ENCODE measurements at regions of chr19 and their contacts with region 1.

Region 1: DNA sequence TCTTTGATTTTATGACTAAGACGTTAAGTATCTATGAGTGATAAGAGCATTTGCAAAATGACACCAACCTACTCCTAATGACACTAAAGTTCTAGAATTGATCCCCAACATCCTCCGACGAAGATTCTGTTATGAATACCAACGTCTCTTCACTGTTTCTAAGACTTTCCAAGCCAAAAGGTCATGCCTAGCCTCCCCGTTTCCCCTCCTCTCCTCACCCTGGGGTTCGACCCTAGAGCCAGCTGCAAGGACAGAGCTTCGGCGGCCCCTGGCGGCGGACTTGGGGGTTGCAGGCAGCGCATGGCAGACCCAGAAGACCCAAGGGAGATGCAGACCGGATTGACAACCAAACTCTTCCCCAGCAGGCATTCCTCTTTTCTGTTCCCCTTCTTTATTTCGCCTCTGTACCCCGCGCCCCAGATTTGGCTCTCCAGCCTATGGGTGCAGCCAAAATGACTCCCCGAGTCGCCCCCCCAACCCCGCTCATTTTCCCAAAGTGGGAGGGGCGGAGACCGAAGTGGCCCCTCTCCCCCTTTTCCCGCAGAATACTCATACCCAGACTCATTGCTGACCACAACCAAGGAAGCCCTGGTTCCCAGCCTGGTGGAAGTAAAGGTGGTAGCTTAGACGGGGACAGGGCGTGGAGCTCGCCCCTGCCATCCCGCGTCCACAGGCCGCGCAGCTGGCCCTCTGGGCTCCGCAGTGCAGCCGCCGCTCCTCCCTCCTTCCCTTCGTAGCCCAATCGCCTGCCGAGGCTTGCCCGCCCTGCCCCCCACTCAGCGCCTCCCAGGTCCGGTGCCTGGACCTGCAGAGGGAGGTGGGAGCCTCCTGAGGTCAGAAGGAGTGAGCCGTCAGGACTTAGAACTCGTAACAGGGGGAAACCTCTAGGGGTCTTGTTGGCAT is 4.1 kb upstream of the EML2 start:
- DNase-seq: peak; percentile 91 to 95
- ATAC-seq: peak in 1 of 2 experiments; percentile 16; a peak in 3 of 6 replicates
- H3K4me3 ChIP-seq: peak overlapping the region; percentile 51; the same call in 2 of the 3 replicates
- H3K27ac ChIP-seq: peak overlapping the region; percentile 88 to 90
- H3K4me1 ChIP-seq: peaks cover 44% of the 10 kb centered on the region
- CTCF ChIP-seq: peak; percentile 99
- EP300 ChIP-seq: no peak
- POLR2A ChIP-seq: no peak
- RAD21 ChIP-seq: peak; percentile 99 to 100

Region 2: GRCh38 chr19:45439569-45440254 is 203.6 kb before region 1 on chr19:
- CTCF ChIA-PET with region 1: interaction called, 64 read pairs
- POLR2A ChIA-PET with region 1: interaction called, 4 read pairs
- DNase-seq: peak; percentile 74 to 83
- ATAC-seq: peak; percentile 26 to 55
- H3K4me3 ChIP-seq: peak overlapping the region; percentile 52
- H3K27ac ChIP-seq: peak overlapping the region; percentile 80 to 95
- H3K4me1 ChIP-seq: peaks cover 27% of the 10 kb centered on the region
- CTCF ChIP-seq: peak; percentile 100
- EP300 ChIP-seq: no peak
- POLR2A ChIP-seq: peak; percentile 12; the same call in 1 of the 2 replicates
- RAD21 ChIP-seq: peak; percentile 77 to 99

Region 3: DNA sequence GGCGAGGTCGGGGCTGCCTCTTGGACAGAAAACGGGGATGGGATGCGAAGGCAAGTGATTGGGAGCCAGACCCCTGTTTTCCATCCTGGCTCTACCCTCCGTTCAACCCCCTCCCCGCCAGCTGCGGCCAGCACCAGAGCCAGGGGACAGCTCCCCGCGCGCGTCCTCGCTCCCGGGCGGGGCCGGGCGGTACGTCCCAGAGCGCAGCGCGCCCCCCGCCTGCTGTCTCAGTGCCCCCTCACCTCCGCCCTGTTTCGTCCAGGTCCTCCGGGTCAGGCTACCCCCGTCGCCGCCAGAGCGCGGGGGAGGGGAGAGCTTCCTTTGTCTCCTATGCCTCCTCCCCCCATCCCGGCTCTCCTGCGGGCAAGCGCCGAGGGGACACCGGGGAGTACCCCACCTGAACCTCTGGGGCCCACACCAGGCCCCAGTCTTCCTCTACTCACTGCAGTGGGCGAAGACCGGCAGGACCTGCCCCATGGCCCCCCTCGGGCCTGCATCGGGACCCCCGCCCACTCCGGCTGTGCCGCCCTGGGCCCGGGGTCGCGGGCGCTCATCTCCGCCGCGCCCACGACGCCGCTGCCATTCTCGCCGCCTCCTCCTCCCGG is 146.8 kb before region 1 on chr19:
- CTCF ChIA-PET with region 1: interaction called, 72 read pairs
- POLR2A ChIA-PET with region 1: interaction called, 4 read pairs
- DNase-seq: no peak
- ATAC-seq: peak; percentile 22 to 46
- H3K4me3 ChIP-seq: peak overlapping the region; percentile 75
- H3K27ac ChIP-seq: peak overlapping the region; percentile 61 to 83; a peak in 5 of 6 replicates
- H3K4me1 ChIP-seq: peaks cover 20% of the 10 kb centered on the region
- CTCF ChIP-seq: no peak
- EP300 ChIP-seq: no peak
- POLR2A ChIP-seq: no peak
- RAD21 ChIP-seq: no peak

Region 4: DNA sequence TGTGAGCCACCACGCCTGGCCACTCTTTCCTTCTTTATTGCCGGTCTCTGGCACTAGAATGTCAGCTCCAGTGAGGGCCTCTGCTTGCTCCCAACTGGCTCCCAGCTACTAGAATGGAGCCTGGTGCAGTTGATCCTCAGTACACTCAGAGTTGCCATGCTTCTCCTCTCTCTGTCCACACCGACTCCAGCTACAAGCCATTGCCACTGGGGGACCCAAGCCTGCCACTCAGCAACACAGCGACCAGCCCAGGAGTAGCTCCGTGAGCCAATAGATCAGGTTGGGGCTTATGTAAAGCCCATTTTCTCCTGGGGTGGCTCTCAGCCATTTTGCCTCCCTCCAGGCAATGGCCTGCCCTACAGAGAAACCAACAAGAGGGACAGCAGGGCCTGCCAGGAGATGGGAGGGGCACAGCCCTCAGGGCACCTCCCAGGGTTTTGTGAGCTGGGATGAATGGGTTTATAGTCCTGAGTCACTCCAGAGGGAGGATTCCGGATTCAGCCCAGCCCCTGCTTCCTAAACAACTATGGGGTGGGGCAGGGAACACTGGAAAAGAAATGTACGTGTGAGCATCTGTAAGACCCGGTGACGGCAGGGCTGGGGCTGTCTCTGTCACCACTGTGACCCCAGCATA is 95.2 kb before region 1 on chr19:
- CTCF ChIA-PET with region 1: interaction called, 28 read pairs
- POLR2A ChIA-PET with region 1: interaction called, 3 read pairs
- DNase-seq: peak; percentile 91 to 93
- ATAC-seq: peak; percentile 92 to 93
- H3K4me3 ChIP-seq: no peak overlapping the region
- H3K27ac ChIP-seq: peak overlapping the region; percentile 68 to 84
- H3K4me1 ChIP-seq: peaks cover 16% of the 10 kb centered on the region
- CTCF ChIP-seq: no peak
- EP300 ChIP-seq: no peak
- POLR2A ChIP-seq: no peak
- RAD21 ChIP-seq: no peak

Region 5: GRCh38 chr19:45584332-45585157 is 58.7 kb before region 1 on chr19 and contains the start of gene OPA3:
- CTCF ChIA-PET with region 1: interaction called, 91 read pairs
- POLR2A ChIA-PET with region 1: interaction called, 25 read pairs
- DNase-seq: peak; percentile 100
- ATAC-seq: peak; percentile 92 to 94
- H3K4me3 ChIP-seq: peak within 1 kb of the TSS; percentile 61
- H3K27ac ChIP-seq: peak within 1 kb of the TSS; percentile 87 to 92
- H3K4me1 ChIP-seq: peaks cover 12% of the 10 kb centered on the region
- CTCF ChIP-seq: no peak
- EP300 ChIP-seq: no peak
- POLR2A ChIP-seq: peak; percentile 84
- RAD21 ChIP-seq: no peak; a peak in 2 of 5 replicates
- polyA plus RNA-seq, gene OPA3: 21.8 and 29.1 TPM in 2 replicates

Region 6: GRCh38 chr19:45615795-45616708 is 27.2 kb before region 1 on chr19:
- CTCF ChIA-PET with region 1: interaction called, 437 read pairs
- POLR2A ChIA-PET with region 1: interaction called, 23 read pairs
- DNase-seq: peak; percentile 96 to 97
- ATAC-seq: peak; percentile 62 to 84
- H3K4me3 ChIP-seq: no peak overlapping the region
- H3K27ac ChIP-seq: peak overlapping the region; percentile 55 to 73
- H3K4me1 ChIP-seq: peaks cover 30% of the 10 kb centered on the region
- CTCF ChIP-seq: no peak
- EP300 ChIP-seq: no peak
- POLR2A ChIP-seq: no peak
- RAD21 ChIP-seq: no peak

Region 7: DNA sequence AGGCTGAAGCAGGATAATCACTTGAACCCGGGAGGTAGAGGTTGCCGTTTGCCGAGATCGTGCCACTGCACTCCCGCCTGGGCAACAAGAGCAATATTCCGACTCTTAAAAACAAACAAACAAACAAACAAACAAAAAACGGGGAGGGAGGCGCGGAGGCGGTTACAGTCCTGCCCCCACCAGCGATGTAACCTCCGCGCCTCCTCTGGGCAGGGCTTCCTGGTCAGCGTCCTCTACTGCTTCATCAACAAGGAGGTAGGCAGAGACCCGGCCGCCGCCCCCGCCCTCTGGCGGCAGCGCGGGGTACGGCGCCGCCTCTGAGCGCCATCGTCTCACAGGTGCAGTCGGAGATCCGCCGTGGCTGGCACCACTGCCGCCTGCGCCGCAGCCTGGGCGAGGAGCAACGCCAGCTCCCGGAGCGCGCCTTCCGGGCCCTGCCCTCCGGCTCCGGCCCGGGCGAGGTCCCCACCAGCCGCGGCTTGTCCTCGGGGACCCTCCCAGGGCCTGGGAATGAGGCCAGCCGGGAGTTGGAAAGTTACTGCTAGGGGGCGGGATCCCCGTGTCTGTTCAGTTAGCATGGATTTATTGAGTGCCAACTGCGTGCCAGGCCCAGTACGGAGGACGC is 38.2 kb after region 1 on chr19:
- CTCF ChIA-PET with region 1: interaction called, 72 read pairs
- POLR2A ChIA-PET with region 1: interaction called, 8 read pairs
- DNase-seq: peak; percentile 92 to 93
- ATAC-seq: peak; percentile 84 to 86
- H3K4me3 ChIP-seq: peak overlapping the region; percentile 38
- H3K27ac ChIP-seq: peak overlapping the region; percentile 67 to 87
- H3K4me1 ChIP-seq: peaks cover 12% of the 10 kb centered on the region
- CTCF ChIP-seq: peak; percentile 98
- EP300 ChIP-seq: no peak
- POLR2A ChIP-seq: no peak; the same call in 1 of the 2 replicates
- RAD21 ChIP-seq: peak; percentile 70 to 83

Measured in A549 (cell line).